PC-9 (cell line): ENCODE measurements at regions of chr9 and their contacts with region 1.

Region 1: DNA sequence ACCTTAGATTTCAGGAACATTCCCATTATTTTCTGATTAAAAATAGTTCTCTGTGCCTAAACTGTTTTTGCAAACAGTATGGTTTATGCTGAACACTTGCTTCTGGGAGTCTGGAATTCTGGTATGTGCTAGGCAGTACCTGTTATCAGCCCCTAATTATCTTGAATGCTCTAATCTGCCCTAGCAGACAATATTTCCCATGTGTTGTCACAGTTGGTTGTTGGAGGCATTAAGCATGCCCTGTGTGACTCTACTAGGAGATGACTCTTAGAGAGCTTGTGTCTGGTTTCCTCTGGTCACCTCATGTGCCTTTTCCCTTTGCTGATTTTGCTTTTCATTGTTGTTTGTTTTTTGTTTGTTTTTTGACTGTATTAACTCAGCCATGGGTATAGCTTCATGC is 36.6 kb downstream of the UHRF2 start:
- DNase-seq: no peak
- H3K4me3 ChIP-seq: no peak overlapping the region
- H3K27ac ChIP-seq: 0 out of 2 replicates have a peak overlapping the region, but pooled peaks have one; percentile 12
- H3K4me1 ChIP-seq: no peaks in the 10 kb centered on the region
- H3K27me3 ChIP-seq: no peaks in the 10 kb centered on the region
- CTCF ChIP-seq: no peak

Region 2: GRCh38 chr9:6008169-6008979 is 441.3 kb before region 1 on chr9:
- CTCF ChIA-PET with region 1: no interaction called
- POLR2A ChIA-PET with region 1: interaction called, 12 read pairs
- intact Hi-C with region 1: no loop called
- DNase-seq: peak; percentile 81 to 87
- H3K4me3 ChIP-seq: peak overlapping the region; percentile 84
- H3K27ac ChIP-seq: peak overlapping the region; percentile 51
- H3K4me1 ChIP-seq: peaks cover 13% of the 10 kb centered on the region; the same call in 1 of the 2 replicates
- H3K27me3 ChIP-seq: no peaks in the 10 kb centered on the region
- CTCF ChIP-seq: no peak